ENCODE measurements at regions of chr1 and their contacts with region 1.

Region 1: GRCh38 chr1:201792534-201793305 is 36.2 kb upstream of the IPO9 start:
- DNase-seq: peak; percentile 69
- ATAC-seq: no peak
- H3K4me3 ChIP-seq: no peak overlapping the region
- H3K4me3 Mint-ChIP-seq: no peak overlapping the region
- H3K27ac ChIP-seq: no peak overlapping the region
- H3K27ac Mint-ChIP-seq: no peak overlapping the region
- H3K4me1 ChIP-seq: no peaks in the 10 kb centered on the region
- H3K4me1 Mint-ChIP-seq: no peaks in the 10 kb centered on the region
- H3K27me3 ChIP-seq: no peaks in the 10 kb centered on the region
- H3K27me3 Mint-ChIP-seq: peaks cover 8% of the 10 kb centered on the region
- CTCF ChIP-seq: peak; percentile 95

Region 2: GRCh38 chr1:201447911-201448871 is 344.5 kb before region 1 on chr1:
- CTCF ChIA-PET with region 1: no interaction called
- POLR2A ChIA-PET with region 1: no interaction called
- intact Hi-C with region 1: loop called (anchors 10 kb)
- DNase-seq: peak; percentile 68
- ATAC-seq: peak; percentile 70
- H3K4me3 ChIP-seq: no peak overlapping the region
- H3K4me3 Mint-ChIP-seq: no peak overlapping the region
- H3K27ac ChIP-seq: no peak overlapping the region
- H3K27ac Mint-ChIP-seq: no peak overlapping the region
- H3K4me1 ChIP-seq: peaks cover 9 to 17% of the 10 kb centered on the region in 2 donors
- H3K4me1 Mint-ChIP-seq: peaks cover 4% of the 10 kb centered on the region
- H3K27me3 ChIP-seq: peaks cover 0 to 9% (median 1%) of the 10 kb centered on the region in 4 experiments
- H3K27me3 Mint-ChIP-seq: peaks cover 22% of the 10 kb centered on the region
- CTCF ChIP-seq: peak; percentile 75

Region 3: GRCh38 chr1:201559679-201560162 is 233.0 kb before region 1 on chr1:
- CTCF ChIA-PET with region 1: interaction called, 106 read pairs
- POLR2A ChIA-PET with region 1: no interaction called
- intact Hi-C with region 1: no loop called
- DNase-seq: peak; percentile 73
- ATAC-seq: peak; percentile 89
- H3K4me3 ChIP-seq: no peak overlapping the region
- H3K4me3 Mint-ChIP-seq: no peak overlapping the region
- H3K27ac ChIP-seq: no peak overlapping the region
- H3K27ac Mint-ChIP-seq: no peak overlapping the region
- H3K4me1 ChIP-seq: peaks cover 0 to 4% of the 10 kb centered on the region in 2 donors
- H3K4me1 Mint-ChIP-seq: peaks cover 2% of the 10 kb centered on the region
- H3K27me3 ChIP-seq: no peaks in the 10 kb centered on the region
- H3K27me3 Mint-ChIP-seq: peaks cover 7% of the 10 kb centered on the region
- CTCF ChIP-seq: peak; percentile 95

Region 4: GRCh38 chr1:201703621-201704439 is 88.9 kb before region 1 on chr1:
- CTCF ChIA-PET with region 1: interaction called, 228 read pairs
- POLR2A ChIA-PET with region 1: no interaction called
- intact Hi-C with region 1: loop called (anchors 1 kb)
- DNase-seq: peak; percentile 67
- ATAC-seq: peak; percentile 64
- H3K4me3 ChIP-seq: no peak overlapping the region
- H3K4me3 Mint-ChIP-seq: no peak overlapping the region
- H3K27ac ChIP-seq: no peak overlapping the region
- H3K27ac Mint-ChIP-seq: no peak overlapping the region
- H3K4me1 ChIP-seq: peaks cover 0 to 4% of the 10 kb centered on the region in 2 donors
- H3K4me1 Mint-ChIP-seq: no peaks in the 10 kb centered on the region
- H3K27me3 ChIP-seq: peaks cover 0 to 11% (median 5%) of the 10 kb centered on the region in 4 experiments
- H3K27me3 Mint-ChIP-seq: peaks cover 7% of the 10 kb centered on the region
- CTCF ChIP-seq: peak; percentile 78

Region 5: GRCh38 chr1:201709564-201710295 is 83.0 kb before region 1 on chr1:
- CTCF ChIA-PET with region 1: interaction called, 228 read pairs
- POLR2A ChIA-PET with region 1: no interaction called
- intact Hi-C with region 1: loop called (anchors 1 kb)
- DNase-seq: peak; percentile 68
- ATAC-seq: peak; percentile 87
- H3K4me3 ChIP-seq: no peak overlapping the region
- H3K4me3 Mint-ChIP-seq: no peak overlapping the region
- H3K27ac ChIP-seq: no peak overlapping the region
- H3K27ac Mint-ChIP-seq: no peak overlapping the region
- H3K4me1 ChIP-seq: no peaks in the 10 kb centered on the region
- H3K4me1 Mint-ChIP-seq: no peaks in the 10 kb centered on the region
- H3K27me3 ChIP-seq: peaks cover 0 to under 1% (median 0%) of the 10 kb centered on the region in 4 experiments
- H3K27me3 Mint-ChIP-seq: peaks cover 4% of the 10 kb centered on the region
- CTCF ChIP-seq: peak; percentile 87

Measured in B cell (primary cell).